ENCODE measurements at regions of chr15 and their contacts with region 1.

Region 1: GRCh38 chr15:65298731-65299130 is 2.9 kb downstream of the RNU5A-1 start:
- DNase-seq: no peak
- ATAC-seq: no peak
- H3K4me3 ChIP-seq: peak overlapping the region in 1 of 2 experiments; percentile 6
- H3K4me3 Mint-ChIP-seq: peak overlapping the region; percentile 88
- H3K27ac ChIP-seq: peak overlapping the region in 1 of 2 experiments; percentile 41
- H3K27ac Mint-ChIP-seq: peak overlapping the region; percentile 84
- H3K4me1 ChIP-seq: peaks cover 36% of the 10 kb centered on the region
- H3K4me1 Mint-ChIP-seq: peaks cover 45% of the 10 kb centered on the region
- H3K27me3 ChIP-seq: no peaks in the 10 kb centered on the region
- H3K27me3 Mint-ChIP-seq: no peaks in the 10 kb centered on the region
- CTCF ChIP-seq: no peak

Region 2: DNA sequence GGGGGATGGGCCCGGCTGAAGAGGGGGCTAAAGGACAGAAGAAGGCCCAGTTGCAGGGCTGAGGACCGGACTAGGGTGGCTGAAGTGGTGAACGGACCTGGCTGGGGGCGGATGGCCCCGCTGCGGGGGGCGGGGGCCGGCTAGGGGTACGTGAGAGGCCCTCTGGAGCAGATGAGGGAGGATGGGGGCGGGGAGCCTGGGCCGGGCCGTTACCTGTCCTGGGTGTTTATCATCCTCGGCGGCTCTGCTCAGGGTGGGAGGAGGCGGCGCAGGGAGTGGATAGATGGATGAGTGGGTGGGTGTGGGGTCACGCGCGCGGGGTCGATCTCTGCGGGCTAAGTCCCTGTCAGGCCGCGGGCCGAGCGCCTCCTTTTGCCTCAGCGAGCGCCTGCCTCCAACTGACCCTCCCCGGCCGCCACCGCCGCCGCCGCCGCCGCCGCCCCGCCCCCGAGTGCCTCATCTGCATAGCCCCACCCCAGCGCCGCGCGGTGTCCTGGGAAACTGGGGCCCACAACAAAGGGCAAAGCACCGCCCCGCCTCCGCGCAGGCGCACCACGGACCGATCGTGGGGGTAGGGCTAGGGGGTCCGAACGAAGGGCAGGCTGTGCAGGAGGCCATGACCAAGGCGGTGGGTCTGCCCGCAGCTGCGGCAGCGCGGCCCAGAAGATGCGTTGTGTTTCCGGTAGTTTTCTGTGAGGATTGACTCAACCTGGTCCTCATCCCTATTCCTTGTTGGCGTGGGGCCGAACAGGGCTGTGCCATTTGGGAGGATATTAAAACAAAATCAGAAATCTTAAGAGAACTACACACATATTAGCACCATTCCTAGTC is 595.7 kb before region 1 on chr15:
- CTCF ChIA-PET with region 1: no interaction called
- POLR2A ChIA-PET with region 1: no interaction called
- intact Hi-C with region 1: loop called in 1 of 2 experiments (anchors 5 kb)
- DNase-seq: peak; percentile 90 to 97 (median 95)
- ATAC-seq: peak; percentile 95
- H3K4me3 ChIP-seq: peak overlapping the region; percentile 79 to 86
- H3K4me3 Mint-ChIP-seq: peak overlapping the region; percentile 91
- H3K27ac ChIP-seq: peak overlapping the region; percentile 60 to 66
- H3K27ac Mint-ChIP-seq: peak overlapping the region; percentile 92
- H3K4me1 ChIP-seq: peaks cover 47% of the 10 kb centered on the region
- H3K4me1 Mint-ChIP-seq: peaks cover 51% of the 10 kb centered on the region
- H3K27me3 ChIP-seq: no peaks in the 10 kb centered on the region
- H3K27me3 Mint-ChIP-seq: no peaks in the 10 kb centered on the region
- CTCF ChIP-seq: no peak

Region 3: GRCh38 chr15:65212097-65212496 is 86.6 kb before region 1 on chr15:
- CTCF ChIA-PET with region 1: interaction called, 13 read pairs
- POLR2A ChIA-PET with region 1: no interaction called
- intact Hi-C with region 1: no loop called
- DNase-seq: peak in 7 of 9 experiments; percentile 6 to 59 (median 44)
- ATAC-seq: peak; percentile 69
- H3K4me3 ChIP-seq: no peak overlapping the region
- H3K4me3 Mint-ChIP-seq: no peak overlapping the region
- H3K27ac ChIP-seq: no peak overlapping the region
- H3K27ac Mint-ChIP-seq: no peak overlapping the region
- H3K4me1 ChIP-seq: no peaks in the 10 kb centered on the region
- H3K4me1 Mint-ChIP-seq: no peaks in the 10 kb centered on the region
- H3K27me3 ChIP-seq: no peaks in the 10 kb centered on the region
- H3K27me3 Mint-ChIP-seq: no peaks in the 10 kb centered on the region
- CTCF ChIP-seq: peak; percentile 45

Region 4: DNA sequence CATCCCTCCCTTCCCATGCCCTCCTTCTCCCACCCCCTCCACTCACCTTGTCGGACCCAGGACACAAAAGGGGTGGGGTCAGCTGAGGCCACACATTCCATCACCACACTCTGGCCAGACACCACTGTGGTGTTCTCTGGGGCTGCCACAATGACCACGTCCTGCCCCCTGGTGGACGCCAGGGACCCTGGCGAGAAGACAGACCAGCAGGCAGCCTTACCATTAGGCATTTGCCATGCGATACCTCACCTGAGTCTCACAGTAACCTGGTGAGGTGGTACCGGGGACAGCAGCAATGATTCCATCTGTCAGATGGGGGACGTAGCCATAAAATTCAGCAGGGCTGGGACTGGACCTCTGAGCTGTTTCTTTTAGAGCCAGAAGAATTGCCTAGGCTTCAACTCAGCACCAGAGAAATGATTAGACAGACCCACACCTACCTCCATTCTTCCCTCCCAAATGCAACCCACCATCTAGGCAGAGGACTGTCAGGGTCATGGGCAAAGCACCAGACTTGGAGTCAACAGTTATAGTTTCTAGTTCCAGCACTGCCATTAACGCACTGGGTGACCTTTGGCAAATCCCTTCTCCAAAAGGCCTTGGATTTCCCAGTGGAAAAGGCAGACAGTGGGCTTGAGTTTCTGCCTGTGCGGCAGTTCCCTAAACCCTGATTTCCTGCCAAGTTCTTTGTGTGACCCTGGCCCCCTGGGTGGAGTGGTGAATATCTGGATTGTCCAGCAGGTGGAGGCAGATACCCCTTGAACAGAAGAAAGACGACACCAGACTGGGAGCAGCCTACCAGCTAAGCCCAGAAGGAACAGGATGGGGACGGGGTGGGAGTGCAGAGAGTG is 102.3 kb after region 1 on chr15:
- CTCF ChIA-PET with region 1: no interaction called
- POLR2A ChIA-PET with region 1: no interaction called
- intact Hi-C with region 1: no loop called
- DNase-seq: peak in 7 of 9 experiments; percentile 28 to 59 (median 46)
- ATAC-seq: peak; percentile 59
- H3K4me3 ChIP-seq: no peak overlapping the region
- H3K4me3 Mint-ChIP-seq: no peak overlapping the region
- H3K27ac ChIP-seq: no peak overlapping the region
- H3K27ac Mint-ChIP-seq: no peak overlapping the region
- H3K4me1 ChIP-seq: peaks cover 5% of the 10 kb centered on the region
- H3K4me1 Mint-ChIP-seq: peaks cover 8% of the 10 kb centered on the region
- H3K27me3 ChIP-seq: peaks cover 13 to 16% of the 10 kb centered on the region in 2 experiments
- H3K27me3 Mint-ChIP-seq: peaks cover 50% of the 10 kb centered on the region
- CTCF ChIP-seq: peak; percentile 44